ENCODE measurements at regions of chr2 and their contacts with region 1.

Region 1: DNA sequence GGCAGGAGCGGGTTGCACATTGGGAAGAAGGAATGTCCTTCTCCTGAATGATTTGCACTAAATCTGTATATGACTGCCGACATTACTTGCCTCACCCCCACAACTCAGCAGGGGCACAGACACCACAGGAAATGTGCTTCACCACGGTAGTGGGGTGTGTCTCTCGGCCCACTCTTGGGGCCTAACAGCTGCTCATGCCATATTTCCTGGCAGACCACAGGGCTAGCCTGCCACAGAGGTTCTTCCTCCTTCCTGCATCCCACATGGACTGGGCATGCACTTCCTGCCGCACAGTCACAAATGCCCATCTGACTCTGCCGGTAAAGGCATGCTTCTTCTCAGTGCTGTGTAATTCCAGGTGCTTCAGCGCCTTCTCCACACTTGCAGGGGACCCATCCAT is 10.3 kb upstream of the PAPOLG start:
- DNase-seq: no peak
- CTCF ChIP-seq: no peak

Region 2: DNA sequence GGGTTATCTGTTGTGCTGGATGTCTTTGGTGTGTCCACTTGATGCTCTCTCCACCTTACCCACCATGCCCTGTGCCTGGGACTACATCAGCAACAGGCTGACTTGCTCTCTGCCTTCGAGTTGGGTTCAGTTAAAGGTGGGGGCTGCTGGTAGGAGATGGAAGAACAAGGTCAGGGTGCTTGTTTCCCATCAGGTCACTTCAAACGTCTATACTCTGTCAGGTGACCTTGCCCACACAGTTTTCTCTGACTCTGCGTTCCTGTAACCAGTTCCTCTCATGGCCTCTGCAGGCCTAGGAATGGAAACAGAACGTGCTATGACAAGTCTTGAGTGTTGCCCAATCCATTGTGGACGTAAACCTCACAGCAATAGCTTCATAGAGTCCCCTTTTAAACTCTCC is 28.1 kb before region 1 on chr2:
- CTCF ChIA-PET with region 1: interaction called, 10 read pairs
- POLR2A ChIA-PET with region 1: no interaction called
- DNase-seq: no peak
- CTCF ChIP-seq: no peak

Measured in GM10248 (cell line).